ENCODE measurements at regions of chr2 and their contacts with region 1.

Region 1: GRCh38 chr2:9565436-9566153 is 10.0 kb upstream of the ADAM17 start:
- DNase-seq: no peak
- ATAC-seq: peak; percentile 61
- H3K4me3 ChIP-seq: no peak overlapping the region
- H3K27ac ChIP-seq: no peak overlapping the region
- H3K4me1 ChIP-seq: no peaks in the 10 kb centered on the region
- H3K27me3 ChIP-seq: no peaks in the 10 kb centered on the region
- CTCF ChIP-seq: no peak
- EP300 ChIP-seq: no peak
- POLR2A ChIP-seq: no peak
- RAD21 ChIP-seq: no peak

Region 2: DNA sequence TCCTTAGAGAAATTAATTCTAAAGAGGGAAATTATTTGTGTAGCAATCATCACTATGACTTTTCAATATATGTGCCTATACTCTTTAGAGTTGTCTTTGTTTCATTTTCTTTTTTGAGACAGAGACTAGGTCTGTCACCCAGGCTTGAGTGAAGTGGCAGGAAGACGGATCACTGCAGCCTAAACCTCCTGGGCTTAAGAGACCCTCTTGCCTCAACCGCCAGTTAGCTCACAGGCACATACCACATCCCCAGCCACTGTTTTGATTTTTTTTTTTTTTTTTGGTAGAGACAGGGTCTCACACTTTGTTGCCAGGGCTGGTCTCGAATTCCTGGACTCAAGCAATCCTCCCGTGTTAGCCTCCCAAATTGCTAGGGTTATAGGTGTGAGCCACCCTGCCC is 52.8 kb after region 1 on chr2:
- CTCF ChIA-PET with region 1: no interaction called
- POLR2A ChIA-PET with region 1: interaction called, 12 read pairs
- RAD21 ChIA-PET with region 1: no interaction called
- SMC1A ChIA-PET with region 1: interaction called, 3 read pairs
- in situ Hi-C with region 1: no loop called
- intact Hi-C with region 1: no loop called
- DNase-seq: no peak
- ATAC-seq: peak; percentile 91
- H3K4me3 ChIP-seq: no peak overlapping the region
- H3K27ac ChIP-seq: no peak overlapping the region
- H3K4me1 ChIP-seq: no peaks in the 10 kb centered on the region
- H3K27me3 ChIP-seq: no peaks in the 10 kb centered on the region
- CTCF ChIP-seq: no peak
- EP300 ChIP-seq: no peak
- POLR2A ChIP-seq: no peak
- RAD21 ChIP-seq: no peak

Region 3: GRCh38 chr2:9665898-9666297 is 100.3 kb after region 1 on chr2:
- CTCF ChIA-PET with region 1: no interaction called
- POLR2A ChIA-PET with region 1: no interaction called
- RAD21 ChIA-PET with region 1: no interaction called
- SMC1A ChIA-PET with region 1: no interaction called
- in situ Hi-C with region 1: no loop called
- intact Hi-C with region 1: no loop called
- DNase-seq: no peak
- ATAC-seq: no peak
- H3K4me3 ChIP-seq: no peak overlapping the region
- H3K27ac ChIP-seq: no peak overlapping the region
- H3K4me1 ChIP-seq: peaks cover 43% of the 10 kb centered on the region
- H3K27me3 ChIP-seq: no peaks in the 10 kb centered on the region
- CTCF ChIP-seq: no peak
- EP300 ChIP-seq: no peak
- POLR2A ChIP-seq: no peak
- RAD21 ChIP-seq: no peak

Measured in GM12878 (cell line).